Activated CD4-positive, alpha-beta T cell treated with anti-CD3 and anti-CD28 coated beads for 36 hours (primary cell): ENCODE measurements at regions of chr17 and their contacts with region 1.

Region 1: DNA sequence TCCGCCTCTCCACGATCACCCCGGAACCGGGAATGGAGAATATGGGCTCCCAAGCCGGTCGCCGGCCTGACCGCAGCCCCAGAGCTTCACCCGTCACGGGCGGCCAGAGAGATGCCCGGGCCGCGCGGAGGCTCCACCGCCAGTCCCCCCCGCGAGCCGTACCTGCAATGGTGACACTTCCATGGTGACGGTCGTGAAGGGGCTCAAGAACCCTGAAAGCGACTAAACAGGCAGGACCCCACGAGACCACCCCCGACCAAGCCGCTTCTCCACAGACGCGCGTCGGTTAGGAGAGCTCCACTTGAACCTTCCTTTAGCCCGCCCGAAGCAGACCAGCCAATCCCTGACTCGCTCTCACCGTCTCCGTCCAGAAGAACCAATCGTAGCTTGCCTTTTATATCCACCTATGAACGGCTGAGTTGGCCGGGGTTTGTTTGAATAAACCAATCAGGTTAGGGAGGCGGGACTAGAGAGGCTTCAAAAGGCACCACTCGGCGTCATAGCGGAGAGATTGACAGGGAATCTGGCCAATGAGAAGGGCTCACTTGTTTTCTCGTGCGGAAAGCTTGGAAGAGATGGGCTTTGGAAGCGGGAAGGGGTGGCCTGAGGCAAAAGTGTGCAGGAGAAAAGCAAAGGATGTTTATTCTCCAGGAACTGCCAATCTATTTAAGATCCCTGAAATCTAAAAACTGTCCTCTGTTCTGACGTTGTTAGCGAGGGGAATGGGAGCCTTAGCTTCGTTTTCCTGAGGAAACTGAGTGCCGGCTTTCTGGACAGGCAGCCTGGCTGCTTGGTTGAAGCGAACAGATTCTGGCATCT is at the start of gene TOP2A:
- DNase-seq: peak; percentile 95
- ATAC-seq: peak; percentile 99
- H3K4me3 Mint-ChIP-seq: peak within 1 kb of the TSS; percentile 86
- H3K27ac Mint-ChIP-seq: peak within 1 kb of the TSS; percentile 89
- H3K4me1 Mint-ChIP-seq: peaks cover 24% of the 10 kb centered on the region
- H3K27me3 Mint-ChIP-seq: no peaks in the 10 kb centered on the region
- total RNA-seq, gene TOP2A: 245 to 322 TPM

Region 2: GRCh38 chr17:40111221-40112128 is 306.3 kb before region 1 on chr17:
- CTCF ChIA-PET with region 1: no interaction called
- POLR2A ChIA-PET with region 1: no interaction called
- intact Hi-C with region 1: no loop called
- DNase-seq: peak; percentile 85
- ATAC-seq: peak; percentile 57
- H3K4me3 Mint-ChIP-seq: peak overlapping the region; percentile 38
- H3K27ac Mint-ChIP-seq: peak overlapping the region; percentile 86
- H3K4me1 Mint-ChIP-seq: peaks cover 73% of the 10 kb centered on the region
- H3K27me3 Mint-ChIP-seq: no peaks in the 10 kb centered on the region

Region 3: DNA sequence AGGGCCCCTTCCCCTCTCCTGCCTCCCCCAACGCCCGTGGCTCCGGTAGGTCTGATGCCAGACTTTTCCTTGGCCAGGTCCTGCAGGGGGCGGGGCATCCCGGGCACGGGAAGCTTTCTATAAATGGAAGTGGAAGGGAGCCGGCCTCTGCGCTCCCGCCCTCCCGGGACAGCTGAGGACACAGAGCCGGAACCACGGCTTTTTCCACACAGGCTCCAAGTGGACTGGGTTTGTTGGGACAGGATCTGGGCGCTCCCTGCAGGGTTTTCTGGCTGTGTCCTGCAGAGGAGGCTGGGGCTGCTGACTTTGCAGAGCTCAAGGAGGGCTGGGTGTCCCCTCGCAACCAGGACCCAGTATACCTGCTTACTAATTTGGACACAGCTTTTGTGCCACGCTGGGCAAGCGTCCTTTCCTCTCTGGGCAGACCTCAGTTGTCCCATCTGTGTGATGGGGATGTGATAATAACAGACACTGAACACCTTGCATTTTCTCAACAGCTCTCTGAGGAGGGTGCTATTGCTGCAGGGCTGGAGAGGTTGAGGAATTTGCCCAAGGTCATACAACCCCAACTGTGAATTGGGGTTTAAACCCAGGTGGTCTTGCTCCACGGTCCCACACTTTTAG is 81.8 kb after region 1 on chr17:
- CTCF ChIA-PET with region 1: no interaction called
- POLR2A ChIA-PET with region 1: no interaction called
- intact Hi-C with region 1: no loop called
- DNase-seq: no peak
- ATAC-seq: no peak
- H3K4me3 Mint-ChIP-seq: no peak overlapping the region
- H3K27ac Mint-ChIP-seq: no peak overlapping the region
- H3K4me1 Mint-ChIP-seq: peaks cover 2% of the 10 kb centered on the region
- H3K27me3 Mint-ChIP-seq: peaks cover 4% of the 10 kb centered on the region

Region 4: DNA sequence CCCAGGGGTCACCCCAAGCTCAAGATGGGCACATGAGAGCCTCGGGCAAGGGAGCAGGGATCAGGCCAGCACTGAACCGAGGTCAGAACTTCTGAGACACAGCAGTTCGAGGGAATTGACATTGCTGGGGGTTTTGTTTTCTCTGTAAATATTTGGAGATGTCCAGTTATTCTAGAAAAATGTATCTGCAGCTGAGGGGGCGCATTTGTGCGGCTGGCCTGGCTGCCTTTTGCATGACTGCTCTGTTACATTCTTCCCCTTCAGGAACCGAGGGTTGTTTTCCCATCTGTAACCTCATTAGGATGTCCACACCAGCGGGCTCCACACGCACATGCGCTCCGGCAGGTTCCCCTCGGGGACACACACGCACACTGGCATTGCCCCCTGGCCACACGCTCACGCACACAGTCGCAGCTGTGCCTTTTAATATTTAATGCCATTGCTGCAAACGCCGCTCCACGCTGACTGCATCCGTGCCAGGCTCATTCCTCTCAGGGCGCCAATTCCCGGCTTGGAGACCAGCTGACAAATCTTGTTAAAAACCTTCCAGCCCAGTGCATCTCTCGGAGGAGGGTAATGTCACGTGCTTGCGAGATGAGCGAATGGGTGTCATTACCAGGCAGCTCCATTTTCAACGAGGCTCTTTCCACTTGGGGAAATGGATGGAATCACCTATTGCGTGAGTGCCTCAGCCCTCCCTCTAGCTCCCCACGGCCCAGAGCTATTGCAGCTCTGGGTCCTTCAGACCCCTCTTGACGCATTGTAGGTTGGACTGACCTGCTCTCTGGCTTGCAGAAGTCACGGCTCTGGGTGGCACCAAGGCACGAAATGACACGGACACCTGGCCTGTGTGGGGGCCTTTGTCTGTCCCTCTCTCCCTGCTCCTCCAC is 134.3 kb after region 1 on chr17:
- CTCF ChIA-PET with region 1: interaction called, 12 read pairs
- POLR2A ChIA-PET with region 1: no interaction called
- intact Hi-C with region 1: no loop called
- DNase-seq: peak; percentile 67
- ATAC-seq: peak; percentile 14
- H3K4me3 Mint-ChIP-seq: peak overlapping the region; percentile 52
- H3K27ac Mint-ChIP-seq: peak overlapping the region; percentile 84
- H3K4me1 Mint-ChIP-seq: peaks cover 98% of the 10 kb centered on the region
- H3K27me3 Mint-ChIP-seq: no peaks in the 10 kb centered on the region

Region 5: DNA sequence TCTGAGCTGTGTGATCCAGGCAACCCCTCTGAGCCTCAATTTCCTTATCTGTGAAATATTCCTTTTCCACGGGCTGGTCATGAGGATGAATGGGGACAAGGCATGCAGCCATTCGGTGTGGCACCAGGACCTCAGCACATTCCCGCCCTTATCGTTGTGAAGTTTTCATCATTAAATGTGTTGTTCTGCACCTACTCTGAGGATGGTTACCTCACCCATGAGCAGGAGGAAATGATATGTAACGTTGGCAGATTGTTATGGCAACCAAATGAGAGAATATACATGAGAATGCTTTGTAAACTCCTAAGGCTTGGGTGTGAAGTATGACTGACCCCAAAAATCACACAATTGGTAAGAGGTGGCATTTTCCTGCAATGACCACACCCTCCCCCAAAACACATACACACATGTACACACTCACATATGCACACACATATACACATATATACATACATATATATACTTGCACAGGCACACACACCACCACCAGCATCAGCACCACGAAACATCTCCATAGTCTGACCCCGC is 190.3 kb after region 1 on chr17:
- CTCF ChIA-PET with region 1: interaction called, 3 read pairs
- POLR2A ChIA-PET with region 1: interaction called, 3 read pairs
- intact Hi-C with region 1: loop called in 1 of 2 experiments (anchors 5 kb)
- DNase-seq: peak; percentile 52
- ATAC-seq: peak; percentile 61
- H3K4me3 Mint-ChIP-seq: peak overlapping the region; percentile 39
- H3K27ac Mint-ChIP-seq: peak overlapping the region; percentile 86
- H3K4me1 Mint-ChIP-seq: peaks cover 98% of the 10 kb centered on the region
- H3K27me3 Mint-ChIP-seq: no peaks in the 10 kb centered on the region